GM12878 (cell line): ENCODE measurements at regions of chr10 and their contacts with region 1.

Region 1: DNA sequence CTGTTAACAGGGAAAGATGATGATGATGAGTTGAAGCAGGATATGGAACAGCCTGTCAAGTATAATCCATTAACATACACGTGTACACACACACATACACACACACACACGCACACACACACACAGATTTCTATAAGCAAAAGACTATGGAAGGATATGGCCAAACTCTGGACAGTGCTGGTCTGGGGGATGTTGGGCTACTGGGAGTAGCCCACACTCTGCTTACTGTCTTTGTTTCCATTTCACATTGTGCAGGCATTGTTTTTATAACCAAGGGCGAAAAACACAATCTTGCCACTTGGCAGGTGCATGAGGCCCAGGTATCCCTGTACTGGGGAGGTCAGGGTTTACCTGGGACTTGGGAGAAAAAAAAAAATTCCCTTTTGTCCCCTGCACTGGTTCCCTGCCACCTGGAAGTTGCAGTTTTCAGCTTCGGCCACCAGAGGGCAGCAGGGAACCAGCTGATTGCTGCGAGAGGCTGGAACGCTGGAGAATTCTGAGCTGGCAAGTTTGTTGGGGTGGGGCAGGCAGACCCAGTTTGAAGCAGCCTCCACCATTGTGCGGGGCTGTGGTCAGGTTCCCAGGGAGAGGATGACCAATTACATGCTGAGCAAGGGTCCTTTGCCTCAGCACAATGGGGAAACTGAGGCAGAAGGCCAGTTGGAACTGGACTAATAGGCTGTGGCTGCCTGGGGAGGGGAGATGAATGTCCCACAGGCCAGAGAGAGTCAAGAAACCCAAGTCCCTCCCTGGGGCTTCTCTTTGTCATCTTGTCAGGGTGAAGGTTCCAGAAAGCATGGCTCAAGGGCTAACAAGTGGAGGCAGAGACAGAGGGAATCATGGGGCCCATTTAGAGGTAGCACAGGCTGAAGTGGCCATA is 27.3 kb downstream of the PPIF start:
- DNase-seq: no peak
- ATAC-seq: peak; percentile 95
- H3K4me3 ChIP-seq: no peak overlapping the region
- H3K27ac ChIP-seq: no peak overlapping the region
- H3K4me1 ChIP-seq: no peaks in the 10 kb centered on the region
- H3K27me3 ChIP-seq: no peaks in the 10 kb centered on the region; a peak in 2 of 4 replicates
- CTCF ChIP-seq: peak; percentile 94 to 98 (median 98)
- EP300 ChIP-seq: no peak
- POLR2A ChIP-seq: no peak
- RAD21 ChIP-seq: peak; percentile 97

Region 2: DNA sequence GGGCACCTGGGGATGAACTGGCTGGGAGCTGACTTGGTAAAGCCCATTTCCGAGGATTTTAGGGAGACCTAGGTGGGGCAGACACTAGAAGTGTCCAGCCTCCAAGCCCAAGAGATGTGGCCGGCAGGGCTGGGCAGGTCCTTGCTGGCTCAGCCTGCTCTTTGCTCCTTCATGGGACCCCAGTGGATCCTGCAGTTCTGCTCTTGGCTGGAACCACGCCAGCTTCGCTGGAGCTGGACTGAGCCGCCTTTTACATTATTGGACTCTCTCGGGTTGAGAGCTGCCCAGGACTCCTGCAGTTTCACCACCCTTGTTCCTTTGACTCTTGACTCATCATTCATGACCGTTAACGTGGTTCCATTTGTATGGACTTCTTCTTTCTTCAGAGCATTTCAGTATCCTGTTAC is 21.5 kb before region 1 on chr10:
- CTCF ChIA-PET with region 1: interaction called, 24 read pairs
- POLR2A ChIA-PET with region 1: no interaction called
- RAD21 ChIA-PET with region 1: no interaction called
- SMC1A ChIA-PET with region 1: interaction called, 5 read pairs
- in situ Hi-C with region 1: no loop called
- intact Hi-C with region 1: no loop called
- DNase-seq: no peak
- ATAC-seq: no peak
- H3K4me3 ChIP-seq: peak overlapping the region; percentile 9; the same call in 1 of the 2 replicates
- H3K27ac ChIP-seq: no peak overlapping the region
- H3K4me1 ChIP-seq: peaks cover 19% of the 10 kb centered on the region
- H3K27me3 ChIP-seq: no peaks in the 10 kb centered on the region
- CTCF ChIP-seq: no peak
- EP300 ChIP-seq: no peak
- POLR2A ChIP-seq: no peak
- RAD21 ChIP-seq: no peak

Region 3: GRCh38 chr10:79390551-79391209 is 16.1 kb after region 1 on chr10:
- CTCF ChIA-PET with region 1: interaction called, 25 read pairs
- POLR2A ChIA-PET with region 1: interaction called, 5 read pairs
- RAD21 ChIA-PET with region 1: interaction called, 6 read pairs
- SMC1A ChIA-PET with region 1: interaction called, 6 read pairs
- in situ Hi-C with region 1: no loop called
- intact Hi-C with region 1: no loop called
- DNase-seq: no peak
- ATAC-seq: peak; percentile 13; the same call in 2 of the 3 replicates
- H3K4me3 ChIP-seq: no peak overlapping the region
- H3K27ac ChIP-seq: no peak overlapping the region
- H3K4me1 ChIP-seq: peaks cover 6% of the 10 kb centered on the region; the same call in 1 of the 2 replicates
- H3K27me3 ChIP-seq: no peaks in the 10 kb centered on the region; a peak in 1 of 4 replicates
- CTCF ChIP-seq: peak in 1 of 3 experiments; percentile 7; a peak in 1 of 6 replicates
- EP300 ChIP-seq: no peak
- POLR2A ChIP-seq: no peak
- RAD21 ChIP-seq: no peak

Region 4: GRCh38 chr10:79472951-79473350 is 98.4 kb after region 1 on chr10:
- CTCF ChIA-PET with region 1: interaction called, 44 read pairs
- POLR2A ChIA-PET with region 1: no interaction called
- RAD21 ChIA-PET with region 1: interaction called, 25 read pairs
- SMC1A ChIA-PET with region 1: interaction called, 28 read pairs
- in situ Hi-C with region 1: loop called (anchors 5 kb)
- intact Hi-C with region 1: no loop called
- DNase-seq: no peak
- ATAC-seq: no peak
- H3K4me3 ChIP-seq: no peak overlapping the region
- H3K27ac ChIP-seq: no peak overlapping the region
- H3K4me1 ChIP-seq: no peaks in the 10 kb centered on the region
- H3K27me3 ChIP-seq: no peaks in the 10 kb centered on the region
- CTCF ChIP-seq: no peak
- EP300 ChIP-seq: no peak
- POLR2A ChIP-seq: no peak
- RAD21 ChIP-seq: no peak